ENCODE measurements at regions of chr10 and their contacts with region 1.

Region 1: GRCh38 chr10:2927958-2928840 is 139.1 kb upstream of the PFKP start:
- DNase-seq: peak; percentile 87
- CTCF ChIP-seq: peak; percentile 83

Region 2: DNA sequence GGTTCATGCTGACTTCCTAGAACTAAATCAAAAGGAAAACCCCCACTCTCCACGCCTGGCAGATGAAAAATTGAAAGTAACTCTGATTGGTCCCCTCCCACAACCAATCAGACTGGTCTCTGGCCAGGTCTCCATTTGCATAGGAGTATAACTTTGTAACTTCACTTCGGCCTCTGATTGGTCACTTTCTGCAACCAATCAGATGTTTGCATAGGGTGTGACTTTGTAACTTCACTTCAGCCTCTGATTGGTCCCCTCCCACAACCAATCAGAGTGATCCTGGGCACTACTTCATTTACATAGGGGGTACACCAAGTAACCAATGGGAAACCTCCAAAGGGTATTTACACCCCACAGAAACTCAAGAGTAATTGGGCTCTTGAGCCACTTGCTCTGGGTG is 167.5 kb before region 1 on chr10:
- in situ Hi-C with region 1: no loop called
- DNase-seq: no peak
- CTCF ChIP-seq: no peak

Region 3: GRCh38 chr10:3054183-3054850 is 126.1 kb after region 1 on chr10:
- in situ Hi-C with region 1: loop called (anchors 10 kb)
- DNase-seq: no peak
- CTCF ChIP-seq: no peak

Region 4: DNA sequence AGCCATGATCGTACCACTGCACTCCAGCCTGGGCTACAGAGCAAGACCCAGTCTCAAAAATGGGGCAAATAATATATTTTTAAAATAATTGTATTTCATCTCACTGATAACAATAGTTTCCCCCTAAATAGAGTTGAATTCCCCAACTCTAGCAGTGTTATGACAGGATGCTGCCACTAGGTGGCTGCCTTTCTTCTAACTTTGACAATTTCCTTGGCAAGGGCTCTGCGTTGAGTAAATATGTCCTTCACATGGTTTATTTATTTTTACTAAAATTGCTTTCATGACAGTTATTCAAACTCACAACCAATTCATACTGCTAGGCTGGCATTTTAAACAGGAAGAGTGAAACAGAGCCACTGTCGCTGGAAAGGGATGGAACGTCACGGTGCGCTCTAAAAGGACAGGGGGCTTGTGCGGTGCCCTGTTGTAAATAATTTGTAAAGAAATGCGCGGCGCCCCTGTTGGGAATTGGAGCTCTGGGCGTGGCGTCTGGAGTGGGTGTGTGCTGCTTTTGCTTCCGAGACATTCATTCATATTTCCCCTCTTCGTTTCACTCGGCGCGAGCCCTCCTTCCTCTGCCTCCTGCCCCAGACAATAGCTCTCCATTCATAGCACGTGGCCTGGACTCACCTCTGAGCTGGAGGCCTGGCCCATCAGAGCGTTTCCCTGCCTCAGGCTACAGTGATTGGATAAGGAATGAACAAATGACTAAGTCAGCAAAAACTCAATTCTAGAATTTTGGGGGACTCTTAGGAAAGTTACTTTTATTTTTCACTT is 264.8 kb after region 1 on chr10:
- in situ Hi-C with region 1: no loop called
- DNase-seq: peak; percentile 70
- CTCF ChIP-seq: peak; percentile 83

Measured in GM13977 (cell line).